ENCODE measurements at regions of chr17 and their contacts with region 1.

Region 1: DNA sequence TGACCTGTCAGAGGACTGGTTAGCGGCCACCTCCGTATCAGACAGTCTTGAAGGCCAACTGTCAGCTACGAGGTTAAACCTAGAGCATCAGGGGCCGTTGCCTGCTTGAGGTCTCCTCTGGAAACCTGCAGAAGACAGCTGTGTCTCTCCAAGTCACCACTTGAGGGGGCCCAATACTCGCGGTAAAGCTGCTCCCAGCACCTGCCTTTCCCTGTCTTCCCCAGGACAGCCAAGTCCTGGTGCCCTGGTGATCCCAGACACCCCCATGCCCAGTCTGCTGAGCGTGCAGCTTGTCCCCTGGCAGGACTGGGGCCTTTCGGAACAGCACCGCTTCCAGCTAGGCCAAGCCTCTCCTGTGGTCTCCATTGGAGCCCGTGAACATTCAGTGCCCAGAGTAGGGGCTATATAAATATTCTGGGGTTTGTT is 80.1 kb downstream of the DNAH17 start:
- DNase-seq: peak; percentile 63 to 89 (median 86)
- H3K4me3 ChIP-seq: peak overlapping the region in 14 of 59 donors; percentile 6 to 46 (median 22)
- H3K27ac ChIP-seq: peak overlapping the region in 51 of 59 donors; percentile 20 to 94 (median 77)
- H3K27me3 ChIP-seq: no peaks in the 10 kb centered on the region
- CTCF ChIP-seq: peak; percentile 31 to 92 (median 80)

Region 2: DNA sequence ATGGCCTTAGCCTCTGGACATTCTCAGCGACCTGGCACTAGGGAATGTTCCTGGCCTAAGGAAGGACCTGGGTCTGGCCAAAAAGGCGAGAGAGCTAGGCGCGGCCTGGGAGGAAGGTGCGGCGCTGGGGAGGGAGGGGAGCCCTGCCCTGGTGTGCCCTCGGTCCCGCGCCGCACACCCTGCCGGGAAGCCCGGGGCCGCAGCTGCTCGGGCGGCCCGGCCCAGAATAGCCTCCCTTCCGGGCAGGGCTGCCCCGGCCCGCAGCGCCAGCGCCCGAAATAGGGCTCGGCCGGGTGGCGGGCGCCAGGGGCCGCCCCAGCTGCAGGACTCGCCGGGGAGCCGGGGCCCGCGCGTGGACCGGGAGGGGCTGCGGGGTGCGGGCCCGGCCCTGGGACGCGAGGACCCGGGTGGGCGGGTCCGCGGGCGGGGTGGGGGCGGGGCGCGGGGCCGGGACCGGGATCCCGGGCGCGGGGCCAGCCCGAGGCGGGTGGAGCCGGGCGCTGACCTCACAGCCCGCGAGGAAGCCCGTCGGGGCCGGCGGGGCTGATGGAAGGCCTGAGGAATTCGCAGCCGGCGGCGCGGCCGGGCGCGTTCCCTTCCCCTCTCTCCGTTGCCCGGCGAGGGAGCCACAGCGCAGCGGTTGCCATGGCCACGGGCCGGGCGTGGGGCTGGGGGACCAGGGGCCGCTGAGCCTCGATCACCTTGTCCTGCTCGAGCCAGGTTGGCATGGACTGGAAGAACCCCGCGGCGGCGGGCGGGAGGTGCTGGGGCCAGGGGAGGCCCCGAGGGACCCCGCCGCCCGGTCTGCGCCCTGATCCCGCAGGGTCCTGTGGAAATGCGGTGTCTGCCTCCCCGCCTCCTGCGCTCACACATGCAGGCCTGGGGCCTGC is 155.3 kb before region 1 on chr17:
- intact Hi-C with region 1: no loop called
- DNase-seq: peak in 8 of 10 donors; percentile 44 to 85 (median 64)
- H3K4me3 ChIP-seq: peak overlapping the region; percentile 24 to 65 (median 49)
- H3K27ac ChIP-seq: peak overlapping the region in 58 of 59 donors; percentile 48 to 95 (median 86)
- H3K27me3 ChIP-seq: no peaks in the 10 kb centered on the region
- CTCF ChIP-seq: peak in 34 of 56 donors; percentile 9 to 57 (median 36)

Region 3: DNA sequence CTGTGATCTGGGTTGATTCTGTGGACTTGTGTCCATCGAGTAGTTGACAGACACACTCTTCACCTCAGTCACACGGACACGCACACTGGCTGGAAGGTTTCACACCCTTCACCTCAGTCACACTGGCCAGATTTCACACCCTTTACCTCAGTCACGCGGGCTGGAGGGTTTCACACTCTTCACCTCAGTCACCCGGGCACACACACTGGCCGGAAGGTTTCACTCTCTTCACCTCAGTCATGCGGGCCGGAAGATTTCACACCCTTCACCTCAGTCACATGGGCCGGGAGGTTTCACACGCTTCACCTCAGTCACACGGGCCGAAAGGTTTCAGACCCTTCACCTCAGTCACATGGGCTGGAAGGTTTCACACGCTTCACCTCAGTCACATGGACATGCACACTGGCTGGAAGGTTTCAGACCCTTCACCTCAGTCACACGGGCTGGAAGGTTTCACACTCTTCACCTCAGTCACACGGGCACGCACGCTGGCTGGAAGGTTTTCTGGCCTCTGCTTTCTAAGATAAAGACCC is 22.4 kb before region 1 on chr17:
- intact Hi-C with region 1: no loop called
- DNase-seq: no peak
- H3K4me3 ChIP-seq: no peak overlapping the region
- H3K27ac ChIP-seq: no peak overlapping the region
- H3K27me3 ChIP-seq: no peaks in the 10 kb centered on the region
- CTCF ChIP-seq: no peak

Region 4: GRCh38 chr17:78708510-78708973 is 211.4 kb after region 1 on chr17:
- intact Hi-C with region 1: loop called (anchors 2 kb)
- DNase-seq: peak; percentile 62 to 86 (median 80)
- H3K4me3 ChIP-seq: peak overlapping the region in 2 of 59 donors; percentile 1 to 9
- H3K27ac ChIP-seq: peak overlapping the region in 50 of 59 donors; percentile 3 to 79 (median 52)
- H3K27me3 ChIP-seq: no peaks in the 10 kb centered on the region
- CTCF ChIP-seq: peak; percentile 60 to 96 (median 89)

Region 5: GRCh38 chr17:78745407-78746088 is 248.4 kb after region 1 on chr17:
- intact Hi-C with region 1: loop called in 1 of 2 experiments (anchors 5 kb)
- DNase-seq: peak in 1 of 10 donors; percentile 46
- H3K4me3 ChIP-seq: peak overlapping the region in 1 of 59 donors; percentile 8
- H3K27ac ChIP-seq: peak overlapping the region in 24 of 59 donors; percentile 2 to 61 (median 24)
- H3K27me3 ChIP-seq: no peaks in the 10 kb centered on the region
- CTCF ChIP-seq: peak; percentile 61 to 86 (median 76)

Region 6: DNA sequence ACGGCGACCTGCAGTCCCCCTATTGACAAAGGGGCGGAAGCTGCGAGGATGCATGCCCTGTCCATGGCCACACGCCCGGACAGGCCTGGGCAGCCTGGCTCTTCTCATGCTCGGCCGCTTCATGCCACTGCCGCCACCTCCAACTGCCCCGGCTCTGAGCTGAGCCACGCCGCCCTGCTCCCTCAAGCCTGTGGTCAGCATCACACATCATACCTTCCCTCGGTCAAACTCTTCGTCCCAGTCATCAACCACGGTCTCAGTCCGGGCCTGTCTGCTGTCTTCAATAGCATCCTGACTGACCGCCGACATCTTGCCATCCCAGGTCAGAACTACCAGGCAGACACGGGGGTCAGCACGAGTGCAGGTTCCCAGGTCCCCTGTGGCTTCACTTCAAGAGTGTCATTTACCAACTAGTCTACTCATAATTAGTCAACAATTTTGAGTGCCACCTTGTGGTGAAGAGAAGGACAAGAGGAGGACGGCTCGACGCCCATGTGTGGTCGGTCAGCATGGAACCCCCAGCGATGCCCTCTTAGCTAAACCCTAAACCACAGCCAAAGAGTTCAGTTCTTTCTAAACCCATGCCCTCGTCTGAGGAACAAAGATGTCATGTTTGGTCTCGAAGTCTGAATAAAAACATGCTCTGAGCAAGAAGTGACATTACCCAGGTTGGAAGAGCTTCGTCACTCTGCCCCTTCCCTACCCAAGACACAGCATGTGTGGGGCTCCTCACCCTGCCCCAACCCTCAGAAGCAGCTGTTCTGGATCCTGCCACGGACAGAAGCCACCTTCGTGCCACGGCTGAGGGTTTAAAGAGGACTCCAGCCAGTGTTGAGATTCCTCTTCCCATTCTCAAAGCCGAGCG is 301.8 kb after region 1 on chr17:
- intact Hi-C with region 1: loop called (anchors 5 to 10 kb)
- DNase-seq: no peak
- H3K4me3 ChIP-seq: no peak overlapping the region
- H3K27ac ChIP-seq: peak overlapping the region in 43 of 59 donors; percentile 2 to 87 (median 43)
- H3K27me3 ChIP-seq: no peaks in the 10 kb centered on the region
- CTCF ChIP-seq: peak; percentile 34 to 76 (median 62)

Region 7: DNA sequence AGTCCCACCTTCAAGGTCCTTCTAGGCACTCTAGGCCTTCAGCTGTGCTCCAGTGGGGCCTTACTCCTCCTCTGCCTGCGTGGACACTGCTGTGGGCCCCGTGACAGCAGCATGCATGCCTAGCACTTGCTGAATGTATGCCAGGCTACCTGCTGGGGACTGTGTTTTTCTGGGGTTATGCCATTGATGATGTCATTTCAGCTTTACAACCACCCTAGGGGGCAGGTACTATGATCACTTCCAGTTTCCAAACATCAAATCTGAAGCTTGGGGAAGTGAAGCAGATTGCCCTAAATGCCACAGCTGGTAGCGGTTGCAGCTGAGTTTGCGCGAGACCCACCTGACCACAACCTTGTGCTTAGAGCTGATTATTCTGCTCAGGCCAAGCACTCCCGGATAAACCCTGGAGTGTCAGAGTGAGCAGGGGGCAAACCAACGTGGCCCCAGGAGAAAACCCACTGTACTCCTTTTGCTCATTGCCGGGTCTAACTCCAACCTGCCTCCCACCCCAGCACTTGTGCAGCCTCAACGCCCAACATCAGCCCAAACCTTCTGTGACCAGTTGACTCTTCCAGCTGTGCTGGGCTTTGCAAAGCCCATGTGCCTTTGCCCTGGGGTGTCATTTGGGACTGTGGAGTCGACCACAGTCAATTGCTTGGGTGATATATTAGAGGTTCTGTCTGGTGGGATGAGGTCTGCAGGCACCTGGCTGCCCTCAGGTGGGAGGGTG is 745.9 kb after region 1 on chr17:
- intact Hi-C with region 1: no loop called
- DNase-seq: no peak
- H3K4me3 ChIP-seq: no peak overlapping the region
- H3K27ac ChIP-seq: peak overlapping the region in 1 of 59 donors; percentile 6
- H3K27me3 ChIP-seq: no peaks in the 10 kb centered on the region
- CTCF ChIP-seq: no peak

Measured in dorsolateral prefrontal cortex (tissue), 120 donors.